T-cell (primary cell): ENCODE measurements at regions of chr2 and their contacts with region 1.

Region 1: DNA sequence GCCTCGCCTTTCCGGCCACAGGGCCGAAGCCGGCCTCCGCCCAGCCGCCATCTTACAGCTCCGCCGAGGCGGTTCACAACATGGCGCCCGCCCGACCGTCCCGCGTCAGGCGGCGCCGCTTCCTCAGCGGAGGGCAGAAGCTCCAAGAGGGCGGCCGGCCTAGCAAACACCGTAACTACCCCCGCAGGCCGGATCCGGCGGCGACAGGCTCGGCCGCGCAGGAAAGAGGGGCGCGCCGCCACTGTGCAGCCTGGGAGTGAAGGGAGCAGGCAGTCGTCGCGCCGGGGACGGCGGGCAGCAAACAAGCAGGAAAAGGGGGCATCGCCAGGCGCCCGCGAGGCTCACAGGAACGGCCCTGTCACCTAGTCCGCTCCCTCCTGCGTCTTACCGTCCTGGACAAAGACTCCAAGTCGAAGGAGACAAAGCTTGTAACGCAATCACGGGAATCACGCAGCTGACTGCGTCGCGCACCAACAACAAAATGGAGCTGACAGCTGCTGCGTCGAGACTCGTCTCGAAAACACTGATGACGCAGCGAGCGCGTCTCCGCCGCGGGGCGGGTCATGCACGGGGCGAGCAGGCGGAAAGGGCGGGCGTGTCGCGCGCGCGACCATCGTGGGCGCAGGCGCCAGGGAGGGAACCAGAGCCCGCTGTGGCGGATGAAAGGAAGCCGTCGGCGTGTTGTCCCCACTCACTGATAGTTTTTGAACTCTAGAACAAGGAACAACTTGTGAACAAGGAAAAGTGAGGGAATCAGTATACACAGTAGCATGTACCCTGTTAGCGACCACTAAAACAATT is at the start of gene CLK1:
- DNase-seq: peak; percentile 93 to 99 (median 98)
- ATAC-seq: peak; percentile 83 to 91 (median 90)
- H3K4me3 ChIP-seq: peak within 1 kb of the TSS; percentile 70 to 100
- H3K4me3 Mint-ChIP-seq: peak within 1 kb of the TSS; percentile 84 to 92 (median 91)
- H3K27ac ChIP-seq: peak within 1 kb of the TSS; percentile 100
- H3K27ac Mint-ChIP-seq: peak within 1 kb of the TSS; percentile 100
- H3K4me1 ChIP-seq: peaks cover 25 to 30% of the 10 kb centered on the region in 2 experiments
- H3K4me1 Mint-ChIP-seq: peaks cover 38 to 41% (median 39%) of the 10 kb centered on the region in 3 donors
- H3K27me3 ChIP-seq: no peaks in the 10 kb centered on the region
- H3K27me3 Mint-ChIP-seq: no peaks in the 10 kb centered on the region
- total RNA-seq, gene CLK1: 357 to 1,046 (median 384) TPM

Region 2: GRCh38 chr2:200811336-200812121 is 52.8 kb before region 1 on chr2 and contains the start of gene BZW1:
- CTCF ChIA-PET with region 1: no interaction called
- POLR2A ChIA-PET with region 1: interaction called, 4 to 11 read pairs
- DNase-seq: peak; percentile 92 to 97 (median 96)
- ATAC-seq: peak; percentile 84 to 92 (median 87)
- H3K4me3 ChIP-seq: peak within 1 kb of the TSS; percentile 87 to 90
- H3K4me3 Mint-ChIP-seq: peak within 1 kb of the TSS; percentile 98 to 100 (median 98)
- H3K27ac ChIP-seq: peak within 1 kb of the TSS; percentile 99
- H3K27ac Mint-ChIP-seq: peak within 1 kb of the TSS; percentile 96 to 99
- H3K4me1 ChIP-seq: peaks cover 19 to 26% of the 10 kb centered on the region in 2 experiments
- H3K4me1 Mint-ChIP-seq: peaks cover 44 to 50% (median 50%) of the 10 kb centered on the region in 3 donors
- H3K27me3 ChIP-seq: no peaks in the 10 kb centered on the region
- H3K27me3 Mint-ChIP-seq: no peaks in the 10 kb centered on the region
- total RNA-seq, gene BZW1: 132 to 258 (median 139) TPM

Region 3: GRCh38 chr2:200850512-200851256 is 13.7 kb before region 1 on chr2:
- CTCF ChIA-PET with region 1: no interaction called
- POLR2A ChIA-PET with region 1: interaction called, 17 to 23 read pairs
- DNase-seq: no peak
- ATAC-seq: no peak
- H3K4me3 ChIP-seq: no peak overlapping the region
- H3K4me3 Mint-ChIP-seq: peak overlapping the region in 1 of 3 donors; percentile 31
- H3K27ac ChIP-seq: no peak overlapping the region
- H3K27ac Mint-ChIP-seq: peak overlapping the region; percentile 16 to 27
- H3K4me1 ChIP-seq: peaks cover 0 to 6% of the 10 kb centered on the region in 2 experiments
- H3K4me1 Mint-ChIP-seq: peaks cover 6 to 23% (median 11%) of the 10 kb centered on the region in 3 donors
- H3K27me3 ChIP-seq: no peaks in the 10 kb centered on the region
- H3K27me3 Mint-ChIP-seq: no peaks in the 10 kb centered on the region

Region 4: DNA sequence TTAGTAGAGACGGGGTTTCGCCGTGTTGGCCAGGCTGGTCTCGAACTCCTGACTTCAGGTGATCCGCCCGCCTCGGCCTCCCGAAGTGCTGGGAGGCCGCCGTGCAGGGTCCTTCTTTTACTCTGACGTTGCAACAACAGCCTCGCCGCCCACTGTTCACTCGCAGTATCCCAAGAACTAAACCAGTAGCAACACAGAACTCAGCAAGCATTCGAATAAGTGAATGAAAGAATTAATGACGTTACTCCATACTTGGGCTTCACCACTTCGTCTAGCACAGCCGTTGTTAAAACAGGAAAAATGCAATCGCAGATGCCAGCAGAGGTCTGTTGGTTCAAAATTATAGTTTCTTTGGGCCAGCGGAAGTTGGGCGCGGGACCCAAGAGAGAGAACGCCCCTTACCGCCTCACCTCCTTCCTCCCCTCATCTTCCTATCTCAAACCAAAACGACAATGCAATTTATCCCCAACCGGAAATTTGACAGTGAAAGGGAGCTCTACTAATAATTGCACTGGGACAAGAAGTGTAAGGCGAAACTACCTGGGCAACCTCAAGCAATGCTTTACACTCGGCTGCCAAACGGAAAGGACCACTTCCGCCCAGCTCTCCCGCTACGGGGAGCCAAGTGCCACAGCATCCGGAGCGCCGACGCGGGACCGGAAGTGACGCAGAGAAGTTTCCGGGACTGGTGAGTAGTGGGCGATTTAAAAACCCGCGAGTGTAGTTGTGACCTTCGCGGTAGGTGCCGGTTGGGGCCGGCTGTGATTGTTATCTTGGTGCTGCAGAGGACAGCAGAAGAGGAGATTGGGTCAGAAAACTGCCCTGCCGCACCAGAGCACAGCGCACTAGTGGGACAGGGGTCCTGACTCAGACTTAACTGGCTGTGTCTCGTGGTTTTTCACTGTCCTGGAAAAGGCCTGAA is 24.6 kb after region 1 on chr2 and contains the starts of genes NIF3L1 and PPIL3:
- CTCF ChIA-PET with region 1: interaction called, 5 to 15 read pairs
- POLR2A ChIA-PET with region 1: interaction called, 11 to 40 read pairs
- DNase-seq: peak; percentile 91 to 99 (median 96)
- ATAC-seq: peak; percentile 81 to 86 (median 82)
- H3K4me3 ChIP-seq: peak within 1 kb of the TSS; percentile 60 to 67
- H3K4me3 Mint-ChIP-seq: peak within 1 kb of the TSS; percentile 94 to 97 (median 96)
- H3K27ac ChIP-seq: peak within 1 kb of the TSS; percentile 89
- H3K27ac Mint-ChIP-seq: peak within 1 kb of the TSS; percentile 95 to 99
- H3K4me1 ChIP-seq: peaks cover 15 to 31% of the 10 kb centered on the region in 2 experiments
- H3K4me1 Mint-ChIP-seq: peaks cover 46 to 62% (median 55%) of the 10 kb centered on the region in 3 donors
- H3K27me3 ChIP-seq: no peaks in the 10 kb centered on the region
- H3K27me3 Mint-ChIP-seq: no peaks in the 10 kb centered on the region
- total RNA-seq, gene NIF3L1: 11.7 to 29.7 (median 25.0) TPM
- total RNA-seq, gene PPIL3: 28.0 to 44.2 (median 30.6) TPM

Region 5: GRCh38 chr2:201220102-201220570 is 355.8 kb after region 1 on chr2:
- CTCF ChIA-PET with region 1: no interaction called
- POLR2A ChIA-PET with region 1: no interaction called
- DNase-seq: peak in 6 of 35 experiments; percentile 11 to 27 (median 18)
- ATAC-seq: peak in 3 of 4 experiments; percentile 23 to 45 (median 29)
- H3K4me3 ChIP-seq: no peak overlapping the region
- H3K4me3 Mint-ChIP-seq: peak overlapping the region in 1 of 3 donors; percentile 36
- H3K27ac ChIP-seq: no peak overlapping the region
- H3K27ac Mint-ChIP-seq: peak overlapping the region; percentile 80 to 83
- H3K4me1 ChIP-seq: peaks cover 12 to 19% of the 10 kb centered on the region in 2 experiments
- H3K4me1 Mint-ChIP-seq: peaks cover 43 to 57% (median 53%) of the 10 kb centered on the region in 3 donors
- H3K27me3 ChIP-seq: no peaks in the 10 kb centered on the region
- H3K27me3 Mint-ChIP-seq: no peaks in the 10 kb centered on the region